Naive thymus-derived CD4-positive, alpha-beta T cell (primary cell): ENCODE measurements at regions of chr3 and their contacts with region 1.

Region 1: GRCh38 chr3:46695177-46695961 is 1.9 kb upstream of the ALS2CL start:
- DNase-seq: peak; percentile 19 to 58 (median 50)
- ATAC-seq: peak; percentile 37
- H3K4me3 ChIP-seq: peak overlapping the region; percentile 6
- H3K4me3 Mint-ChIP-seq: peak overlapping the region; percentile 40 to 94 (median 76)
- H3K27ac ChIP-seq: peak overlapping the region; percentile 75
- H3K27ac Mint-ChIP-seq: peak overlapping the region; percentile 76 to 95 (median 92)
- H3K4me1 ChIP-seq: peaks cover 32 to 78% of the 10 kb centered on the region in 2 donors
- H3K4me1 Mint-ChIP-seq: peaks cover 32 to 94% (median 69%) of the 10 kb centered on the region in 7 donors
- H3K27me3 ChIP-seq: no peaks in the 10 kb centered on the region
- H3K27me3 Mint-ChIP-seq: peaks cover 0 to 39% (median 0%) of the 10 kb centered on the region in 5 donors

Region 2: GRCh38 chr3:46629551-46630517 is 65.5 kb before region 1 on chr3:
- CTCF ChIA-PET with region 1: no interaction called
- POLR2A ChIA-PET with region 1: no interaction called
- intact Hi-C with region 1: loop called in 1 of 2 experiments (anchors 2 kb)
- DNase-seq: peak; percentile 61 to 82 (median 77)
- ATAC-seq: peak; percentile 98
- H3K4me3 ChIP-seq: peak overlapping the region; percentile 73
- H3K4me3 Mint-ChIP-seq: peak overlapping the region; percentile 67 to 86 (median 79)
- H3K27ac ChIP-seq: peak overlapping the region; percentile 62
- H3K27ac Mint-ChIP-seq: peak overlapping the region; percentile 76 to 97 (median 90)
- H3K4me1 ChIP-seq: peaks cover 9 to 29% of the 10 kb centered on the region in 2 donors
- H3K4me1 Mint-ChIP-seq: peaks cover 13 to 42% (median 30%) of the 10 kb centered on the region in 7 donors
- H3K27me3 ChIP-seq: no peaks in the 10 kb centered on the region
- H3K27me3 Mint-ChIP-seq: peaks cover 0 to 17% (median 0%) of the 10 kb centered on the region in 5 donors

Region 3: GRCh38 chr3:46845791-46846623 is 150.6 kb after region 1 on chr3:
- CTCF ChIA-PET with region 1: no interaction called
- POLR2A ChIA-PET with region 1: no interaction called
- intact Hi-C with region 1: loop called in 1 of 2 experiments (anchors 5 kb)
- DNase-seq: peak; percentile 69 to 83 (median 78)
- ATAC-seq: peak; percentile 97
- H3K4me3 ChIP-seq: peak overlapping the region; percentile 66
- H3K4me3 Mint-ChIP-seq: peak overlapping the region; percentile 50 to 91 (median 82)
- H3K27ac ChIP-seq: peak overlapping the region; percentile 65
- H3K27ac Mint-ChIP-seq: peak overlapping the region in 6 of 9 donors; percentile 20 to 75 (median 60)
- H3K4me1 ChIP-seq: peaks cover 0 to 11% of the 10 kb centered on the region in 2 donors
- H3K4me1 Mint-ChIP-seq: peaks cover 0 to 14% (median 5%) of the 10 kb centered on the region in 7 donors
- H3K27me3 ChIP-seq: no peaks in the 10 kb centered on the region
- H3K27me3 Mint-ChIP-seq: peaks cover 0 to 36% (median 0%) of the 10 kb centered on the region in 5 donors

Region 4: DNA sequence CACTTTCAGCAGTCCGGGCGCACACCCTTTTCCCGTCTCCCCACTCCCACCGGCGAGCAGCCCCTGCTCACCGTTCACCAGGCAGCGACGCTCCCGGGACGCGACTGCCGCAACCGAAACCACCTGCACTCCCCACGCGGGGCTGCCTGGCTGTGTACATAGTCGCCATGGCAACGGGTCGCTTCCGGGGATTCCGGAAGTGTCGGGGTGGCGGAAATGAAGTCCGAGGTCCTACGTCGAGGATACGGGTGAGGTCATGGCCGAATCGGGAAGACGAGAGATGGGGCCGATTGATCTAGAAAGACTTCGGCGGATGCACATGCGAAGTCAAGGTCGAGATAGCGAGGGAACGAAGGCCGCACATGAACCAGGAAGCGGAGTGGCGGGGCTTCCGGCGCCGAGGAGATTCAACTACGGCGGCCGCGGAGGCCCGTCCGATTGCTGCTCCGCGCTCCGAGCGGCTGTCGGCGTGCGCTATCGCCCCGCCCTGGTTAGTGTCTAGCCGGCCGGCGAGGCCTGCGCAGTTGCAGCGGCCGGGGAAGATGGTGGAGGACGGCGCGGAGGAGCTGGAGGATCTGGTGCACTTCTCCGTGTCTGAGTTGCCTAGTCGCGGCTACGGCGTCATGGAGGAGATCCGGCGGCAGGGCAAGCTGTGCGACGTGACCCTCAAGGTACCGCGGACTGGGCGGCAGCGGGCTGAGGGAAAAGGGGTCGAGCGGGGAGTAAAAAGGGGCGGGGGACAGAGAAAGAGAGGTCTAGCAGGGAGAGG is 587.2 kb after region 1 on chr3 and contains the starts of genes KIF9 and KLHL18:
- CTCF ChIA-PET with region 1: no interaction called
- POLR2A ChIA-PET with region 1: no interaction called
- intact Hi-C with region 1: loop called in 1 of 2 experiments (anchors 5 kb)
- DNase-seq: peak; percentile 86 to 98 (median 97)
- ATAC-seq: peak; percentile 91
- H3K4me3 ChIP-seq: peak within 1 kb of the TSS; percentile 76
- H3K4me3 Mint-ChIP-seq: peak within 1 kb of the TSS; percentile 89 to 100 (median 98)
- H3K27ac ChIP-seq: peak within 1 kb of the TSS; percentile 93
- H3K27ac Mint-ChIP-seq: peak within 1 kb of the TSS; percentile 98 to 100 (median 99)
- H3K4me1 ChIP-seq: peaks cover 14 to 23% of the 10 kb centered on the region in 2 donors
- H3K4me1 Mint-ChIP-seq: peaks cover 29 to 56% (median 43%) of the 10 kb centered on the region in 7 donors
- H3K27me3 ChIP-seq: no peaks in the 10 kb centered on the region
- H3K27me3 Mint-ChIP-seq: no peaks in the 10 kb centered on the region
- total RNA-seq, gene KIF9: 2.7 to 15.0 (median 4.1) TPM
- total RNA-seq, gene KLHL18: 21.7 to 47.5 (median 24.5) TPM